Activated CD8-positive, alpha-beta memory T cell treated with anti-CD3 and anti-CD28 coated beads, Interleukin-2, amount 10 ng/mL, durations not matched to agents 7 days and 5 days (primary cell): ENCODE measurements at regions of chr1 and their contacts with region 1.

Region 1: GRCh38 chr1:206461602-206462455 is 8.4 kb upstream of the IKBKE start:
- DNase-seq: peak; percentile 86
- ATAC-seq: peak; percentile 77
- H3K4me3 Mint-ChIP-seq: no peak overlapping the region
- H3K27ac Mint-ChIP-seq: no peak overlapping the region
- H3K4me1 Mint-ChIP-seq: peaks cover 45% of the 10 kb centered on the region
- H3K27me3 Mint-ChIP-seq: no peaks in the 10 kb centered on the region

Region 2: GRCh38 chr1:206449622-206450021 is 12.2 kb before region 1 on chr1:
- CTCF ChIA-PET with region 1: interaction called, 16 read pairs
- DNase-seq: no peak
- ATAC-seq: no peak
- H3K4me3 Mint-ChIP-seq: no peak overlapping the region
- H3K27ac Mint-ChIP-seq: no peak overlapping the region
- H3K4me1 Mint-ChIP-seq: no peaks in the 10 kb centered on the region
- H3K27me3 Mint-ChIP-seq: no peaks in the 10 kb centered on the region